ENCODE measurements at regions of chr6 and their contacts with region 1.

Region 1: GRCh38 chr6:129598244-129599187 is 111.5 kb downstream of the ARHGAP18 start:
- DNase-seq: peak in 4 of 5 donors; percentile 68 to 73 (median 71)
- H3K4me3 ChIP-seq: no peak overlapping the region
- H3K4me3 Mint-ChIP-seq: no peak overlapping the region
- H3K27ac ChIP-seq: no peak overlapping the region
- H3K27ac Mint-ChIP-seq: no peak overlapping the region
- H3K4me1 ChIP-seq: peaks cover 3% of the 10 kb centered on the region
- H3K4me1 Mint-ChIP-seq: peaks cover 0 to 2% (median under 1%) of the 10 kb centered on the region in 4 donors
- H3K27me3 ChIP-seq: no peaks in the 10 kb centered on the region
- H3K27me3 Mint-ChIP-seq: no peaks in the 10 kb centered on the region

Region 2: GRCh38 chr6:129498950-129499842 is 99.3 kb before region 1 on chr6:
- CTCF ChIA-PET with region 1: interaction called, 10 read pairs
- POLR2A ChIA-PET with region 1: no interaction called
- intact Hi-C with region 1: loop called (anchors 1 kb)
- DNase-seq: peak; percentile 29 to 62 (median 55)
- H3K4me3 ChIP-seq: no peak overlapping the region
- H3K4me3 Mint-ChIP-seq: peak overlapping the region; percentile 37 to 89 (median 76)
- H3K27ac ChIP-seq: no peak overlapping the region
- H3K27ac Mint-ChIP-seq: peak overlapping the region in 5 of 7 donors; percentile 1 to 50 (median 19)
- H3K4me1 ChIP-seq: peaks cover 21% of the 10 kb centered on the region
- H3K4me1 Mint-ChIP-seq: peaks cover 15 to 24% (median 19%) of the 10 kb centered on the region in 4 donors
- H3K27me3 ChIP-seq: no peaks in the 10 kb centered on the region
- H3K27me3 Mint-ChIP-seq: no peaks in the 10 kb centered on the region

Region 3: DNA sequence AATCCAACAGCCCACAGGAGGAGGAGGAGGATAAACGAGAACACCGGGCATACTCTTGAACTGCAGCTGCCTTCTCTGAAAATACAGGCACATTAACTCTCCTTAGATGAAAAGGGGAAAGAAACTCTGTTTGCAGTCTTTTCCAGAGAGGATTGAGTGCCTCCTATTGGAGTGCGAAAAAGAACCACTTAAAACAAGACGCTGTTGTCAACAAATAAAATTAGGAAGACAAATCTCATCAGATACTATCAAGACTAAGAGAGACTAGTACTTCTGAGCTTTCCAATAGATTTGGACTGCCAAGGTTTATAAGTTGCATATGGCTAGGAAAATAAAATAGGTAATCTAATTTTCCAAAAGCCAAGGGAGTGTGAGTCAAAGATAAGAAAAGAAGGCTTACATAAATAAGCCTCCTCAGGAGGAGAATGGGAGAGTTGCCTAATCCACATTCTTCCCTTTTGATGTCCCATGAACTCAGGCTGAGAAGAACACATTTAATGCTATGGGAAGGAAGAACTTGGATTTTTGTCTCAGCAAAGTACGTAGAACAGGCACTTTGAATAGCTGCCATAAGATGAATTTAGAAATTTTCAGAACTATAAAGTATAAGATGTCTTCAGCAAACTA is 43.2 kb before region 1 on chr6:
- CTCF ChIA-PET with region 1: no interaction called
- POLR2A ChIA-PET with region 1: no interaction called
- intact Hi-C with region 1: no loop called
- DNase-seq: no peak
- H3K4me3 ChIP-seq: no peak overlapping the region
- H3K4me3 Mint-ChIP-seq: no peak overlapping the region
- H3K27ac ChIP-seq: no peak overlapping the region
- H3K27ac Mint-ChIP-seq: no peak overlapping the region
- H3K4me1 ChIP-seq: no peaks in the 10 kb centered on the region
- H3K4me1 Mint-ChIP-seq: no peaks in the 10 kb centered on the region
- H3K27me3 ChIP-seq: no peaks in the 10 kb centered on the region
- H3K27me3 Mint-ChIP-seq: peaks cover 0 to 5% of the 10 kb centered on the region in 2 donors

Region 4: DNA sequence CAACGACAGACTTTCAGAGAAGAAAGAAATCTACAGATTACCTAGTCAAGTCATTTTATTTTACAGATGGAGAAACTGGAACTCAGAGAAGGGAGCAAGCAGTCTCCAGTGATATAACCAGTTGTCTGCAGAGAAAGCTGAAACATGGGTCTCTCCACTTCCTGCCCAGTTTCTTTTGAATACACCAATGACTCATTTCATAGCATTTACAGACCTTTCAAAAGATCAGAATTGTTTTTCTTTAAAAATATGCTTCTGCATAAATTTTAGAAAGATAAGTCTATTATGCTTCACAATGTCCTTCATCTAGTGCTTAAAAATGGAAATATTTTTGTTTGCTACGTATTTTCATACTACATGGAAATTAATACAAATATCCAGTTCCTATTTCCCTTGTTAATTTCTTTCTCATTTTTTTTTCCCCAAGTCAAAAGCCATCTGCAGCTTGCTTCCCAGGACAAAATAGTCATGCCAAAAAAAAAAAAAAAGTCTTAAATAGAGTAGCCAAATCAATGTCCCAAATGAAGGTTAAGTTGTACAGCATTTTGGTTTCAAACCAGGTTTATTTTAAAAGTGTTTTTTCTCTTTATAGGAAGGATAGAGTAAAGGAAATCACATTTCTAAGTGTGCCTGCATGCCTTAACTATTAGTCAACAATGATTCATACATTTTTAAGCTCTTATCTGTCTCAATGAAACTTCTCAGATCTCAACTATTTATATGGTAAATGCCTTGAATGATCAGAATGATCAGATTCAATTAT is 74.5 kb after region 1 on chr6:
- CTCF ChIA-PET with region 1: interaction called, 12 read pairs
- POLR2A ChIA-PET with region 1: interaction called, 4 read pairs
- intact Hi-C with region 1: loop called (anchors 1 kb)
- DNase-seq: peak; percentile 18 to 48 (median 19)
- H3K4me3 ChIP-seq: peak overlapping the region in 1 of 2 donors; percentile 53
- H3K4me3 Mint-ChIP-seq: peak overlapping the region; percentile 80 to 87 (median 82)
- H3K27ac ChIP-seq: peak overlapping the region; percentile 56
- H3K27ac Mint-ChIP-seq: peak overlapping the region; percentile 74 to 94 (median 92)
- H3K4me1 ChIP-seq: peaks cover 32% of the 10 kb centered on the region
- H3K4me1 Mint-ChIP-seq: peaks cover 29 to 31% (median 29%) of the 10 kb centered on the region in 4 donors
- H3K27me3 ChIP-seq: no peaks in the 10 kb centered on the region
- H3K27me3 Mint-ChIP-seq: no peaks in the 10 kb centered on the region

Region 5: DNA sequence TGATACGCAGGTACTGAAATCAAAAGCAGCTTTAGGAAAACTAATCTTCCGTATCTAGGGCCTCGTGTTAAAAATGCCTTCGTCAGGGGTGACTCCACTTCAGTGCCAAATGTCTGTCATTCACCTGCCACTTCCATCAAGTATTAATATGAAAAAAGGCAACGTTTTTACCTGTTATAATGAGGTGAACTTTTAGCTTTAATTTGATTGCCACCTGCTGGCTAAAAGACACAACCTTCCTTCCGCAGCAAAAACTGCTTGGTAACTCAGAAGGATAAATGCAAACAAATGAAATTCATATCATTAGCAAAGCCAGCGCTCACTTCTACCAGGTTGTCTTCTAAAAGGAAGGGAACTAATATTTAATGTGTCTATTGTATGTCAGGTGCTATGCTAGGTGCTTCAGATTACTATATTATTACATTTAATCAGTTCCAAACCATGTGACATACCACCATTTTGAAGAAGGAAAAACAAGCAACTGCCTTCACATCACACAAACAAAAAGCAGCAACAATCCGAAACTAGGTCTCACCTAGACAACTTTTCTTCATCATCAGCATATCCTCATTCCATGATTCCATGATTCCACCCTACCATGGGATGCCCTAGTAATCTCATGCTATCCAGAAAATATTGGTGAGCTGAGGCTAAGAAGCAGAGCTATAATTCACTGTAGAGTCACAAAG is 132.1 kb after region 1 on chr6:
- CTCF ChIA-PET with region 1: interaction called, 287 read pairs
- POLR2A ChIA-PET with region 1: interaction called, 24 read pairs
- intact Hi-C with region 1: loop called (anchors 1 kb)
- DNase-seq: peak; percentile 38 to 61 (median 56)
- H3K4me3 ChIP-seq: no peak overlapping the region
- H3K4me3 Mint-ChIP-seq: no peak overlapping the region
- H3K27ac ChIP-seq: no peak overlapping the region
- H3K27ac Mint-ChIP-seq: peak overlapping the region in 4 of 7 donors; percentile 16 to 73 (median 54)
- H3K4me1 ChIP-seq: peaks cover 13% of the 10 kb centered on the region
- H3K4me1 Mint-ChIP-seq: peaks cover 6 to 11% (median 9%) of the 10 kb centered on the region in 4 donors
- H3K27me3 ChIP-seq: no peaks in the 10 kb centered on the region
- H3K27me3 Mint-ChIP-seq: no peaks in the 10 kb centered on the region

Region 6: DNA sequence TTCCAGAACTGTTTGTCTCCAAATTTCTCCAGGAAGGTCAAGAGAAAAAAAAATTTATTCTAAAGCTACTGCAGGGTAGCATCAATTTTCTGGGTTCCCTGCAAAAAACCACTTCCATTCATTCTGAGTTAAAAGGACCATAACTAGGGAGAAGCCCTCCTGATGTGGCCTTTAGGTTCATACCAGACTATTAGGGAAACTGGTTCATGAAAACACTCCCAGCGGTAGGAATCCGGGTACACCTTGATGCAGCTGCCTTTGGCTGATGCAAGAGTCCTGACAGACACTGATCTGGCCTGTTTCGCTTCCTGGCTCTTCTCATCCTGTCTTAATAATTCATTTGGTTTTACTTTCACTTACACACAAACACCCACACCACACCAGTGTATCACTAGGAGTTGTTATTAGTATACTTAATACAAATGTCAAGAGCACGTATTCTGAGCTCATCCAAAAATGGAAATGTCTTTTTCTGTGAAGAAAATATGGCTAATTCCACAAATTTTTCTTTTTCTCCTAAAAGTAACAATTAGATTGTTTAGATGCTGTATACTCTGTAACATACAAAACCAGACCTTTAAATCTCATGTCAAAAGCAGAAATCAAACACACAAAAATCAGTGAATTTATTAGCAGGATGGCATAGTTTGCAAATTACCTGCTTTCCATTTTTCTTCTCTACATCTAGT is 149.8 kb after region 1 on chr6:
- CTCF ChIA-PET with region 1: interaction called, 15 read pairs
- POLR2A ChIA-PET with region 1: no interaction called
- intact Hi-C with region 1: no loop called
- DNase-seq: peak; percentile 56 to 71 (median 60)
- H3K4me3 ChIP-seq: peak overlapping the region; percentile 12 to 68
- H3K4me3 Mint-ChIP-seq: peak overlapping the region; percentile 73 to 93 (median 86)
- H3K27ac ChIP-seq: peak overlapping the region; percentile 59
- H3K27ac Mint-ChIP-seq: peak overlapping the region; percentile 85 to 97 (median 96)
- H3K4me1 ChIP-seq: peaks cover 61% of the 10 kb centered on the region
- H3K4me1 Mint-ChIP-seq: peaks cover 42 to 61% (median 55%) of the 10 kb centered on the region in 4 donors
- H3K27me3 ChIP-seq: no peaks in the 10 kb centered on the region
- H3K27me3 Mint-ChIP-seq: no peaks in the 10 kb centered on the region

Region 7: DNA sequence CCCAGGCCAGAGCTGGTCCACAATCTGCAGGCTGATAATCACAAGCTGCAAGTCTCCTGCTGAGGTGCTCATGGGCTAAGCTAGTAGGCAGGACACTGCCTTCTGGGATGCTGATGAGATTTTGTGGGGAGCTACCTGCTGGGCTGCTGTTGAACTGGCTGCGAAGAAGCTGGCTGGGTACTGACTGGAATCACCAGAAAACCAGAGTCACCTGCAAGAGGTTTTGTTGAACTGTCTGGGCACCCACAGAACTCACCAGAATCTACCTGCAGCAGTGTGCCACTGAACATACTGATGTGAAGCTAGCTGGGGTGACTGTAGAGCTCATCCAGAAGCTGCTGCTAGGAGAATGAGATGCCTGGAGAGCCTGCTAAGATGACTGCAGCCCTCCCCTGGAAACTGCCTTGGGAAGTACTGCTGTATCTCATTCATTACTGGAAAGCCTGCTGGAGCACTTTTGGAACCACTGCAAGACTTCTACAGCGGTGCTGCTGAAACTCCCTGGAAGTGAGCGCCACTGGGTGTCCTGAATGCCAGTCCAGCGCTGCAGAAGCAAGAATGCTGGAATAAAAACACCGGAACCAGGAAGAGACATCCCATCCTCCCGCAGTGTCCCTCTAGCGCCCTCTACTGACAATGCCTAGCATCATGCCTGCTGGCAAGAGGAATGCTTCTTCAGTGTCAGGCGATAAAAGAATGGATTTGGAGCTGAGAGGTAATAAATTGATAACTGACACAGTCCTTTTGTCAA is 176.4 kb after region 1 on chr6:
- CTCF ChIA-PET with region 1: interaction called, 39 read pairs
- POLR2A ChIA-PET with region 1: no interaction called
- intact Hi-C with region 1: loop called (anchors 1 kb)
- DNase-seq: peak; percentile 27 to 44 (median 32)
- H3K4me3 ChIP-seq: no peak overlapping the region
- H3K4me3 Mint-ChIP-seq: no peak overlapping the region
- H3K27ac ChIP-seq: no peak overlapping the region
- H3K27ac Mint-ChIP-seq: no peak overlapping the region
- H3K4me1 ChIP-seq: no peaks in the 10 kb centered on the region
- H3K4me1 Mint-ChIP-seq: no peaks in the 10 kb centered on the region
- H3K27me3 ChIP-seq: no peaks in the 10 kb centered on the region
- H3K27me3 Mint-ChIP-seq: no peaks in the 10 kb centered on the region

Region 8: GRCh38 chr6:130020907-130021629 is 422.6 kb after region 1 on chr6:
- CTCF ChIA-PET with region 1: interaction called, 34 read pairs
- POLR2A ChIA-PET with region 1: interaction called, 5 read pairs
- intact Hi-C with region 1: loop called (anchors 1 kb)
- DNase-seq: peak; percentile 80 to 84 (median 82)
- H3K4me3 ChIP-seq: peak overlapping the region; percentile 49 to 54
- H3K4me3 Mint-ChIP-seq: peak overlapping the region; percentile 97 to 99 (median 98)
- H3K27ac ChIP-seq: peak overlapping the region; percentile 72
- H3K27ac Mint-ChIP-seq: peak overlapping the region; percentile 94 to 98 (median 97)
- H3K4me1 ChIP-seq: peaks cover 18% of the 10 kb centered on the region
- H3K4me1 Mint-ChIP-seq: peaks cover 23 to 55% (median 27%) of the 10 kb centered on the region in 4 donors
- H3K27me3 ChIP-seq: no peaks in the 10 kb centered on the region
- H3K27me3 Mint-ChIP-seq: peaks cover 0 to 2% of the 10 kb centered on the region in 2 donors

Measured in CD4-positive, alpha-beta memory T cell (primary cell).